GM12878 (cell line): ENCODE measurements at regions of chr7 and their contacts with region 1.

Region 1: GRCh38 chr7:5526100-5526905 is 102.7 kb upstream of the TNRC18 start:
- DNase-seq: no peak
- ATAC-seq: peak; percentile 4
- H3K4me3 ChIP-seq: peak overlapping the region; percentile 99; the same call in 1 of the 2 replicates
- H3K27ac ChIP-seq: peak overlapping the region; percentile 3
- H3K4me1 ChIP-seq: peaks cover 5% of the 10 kb centered on the region
- H3K27me3 ChIP-seq: no peaks in the 10 kb centered on the region
- CTCF ChIP-seq: peak in 1 of 3 experiments; percentile 31; a peak in 2 of 6 replicates
- EP300 ChIP-seq: no peak
- POLR2A ChIP-seq: no peak
- RAD21 ChIP-seq: 0 out of 2 replicates have a peak, but pooled peaks have one; percentile 1

Region 2: DNA sequence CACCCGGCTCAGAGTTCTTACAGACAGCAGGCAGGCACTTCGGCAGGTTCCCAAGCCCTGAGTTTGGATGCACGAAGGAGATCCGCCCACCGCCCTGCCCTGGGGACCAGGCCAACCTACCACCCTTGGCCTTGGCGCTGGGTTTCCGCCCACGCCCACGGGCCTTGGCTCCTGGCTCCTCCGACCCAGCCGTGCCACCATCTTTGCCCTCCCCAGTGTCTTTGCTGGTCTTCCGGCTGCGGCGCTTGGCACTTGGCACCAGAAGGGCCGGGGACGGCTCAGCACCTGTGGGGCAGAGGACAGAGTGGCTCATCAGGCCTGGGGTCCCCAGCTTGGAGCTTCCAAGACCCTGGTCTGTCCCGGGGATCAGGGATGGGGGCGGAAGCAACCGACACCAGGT is 211.4 kb before region 1 on chr7:
- CTCF ChIA-PET with region 1: no interaction called
- POLR2A ChIA-PET with region 1: no interaction called
- RAD21 ChIA-PET with region 1: no interaction called
- SMC1A ChIA-PET with region 1: no interaction called
- in situ Hi-C with region 1: no loop called
- intact Hi-C with region 1: no loop called
- DNase-seq: no peak
- ATAC-seq: no peak
- H3K4me3 ChIP-seq: no peak overlapping the region
- H3K27ac ChIP-seq: no peak overlapping the region
- H3K4me1 ChIP-seq: no peaks in the 10 kb centered on the region
- H3K27me3 ChIP-seq: no peaks in the 10 kb centered on the region
- CTCF ChIP-seq: no peak
- EP300 ChIP-seq: no peak
- POLR2A ChIP-seq: no peak
- RAD21 ChIP-seq: no peak

Region 3: GRCh38 chr7:5333121-5334045 is 192.9 kb before region 1 on chr7:
- CTCF ChIA-PET with region 1: no interaction called
- POLR2A ChIA-PET with region 1: interaction called, 11 read pairs
- RAD21 ChIA-PET with region 1: no interaction called
- SMC1A ChIA-PET with region 1: no interaction called
- in situ Hi-C with region 1: no loop called
- intact Hi-C with region 1: no loop called
- DNase-seq: no peak
- ATAC-seq: peak; percentile 57
- H3K4me3 ChIP-seq: no peak overlapping the region
- H3K27ac ChIP-seq: no peak overlapping the region
- H3K4me1 ChIP-seq: peaks cover 23% of the 10 kb centered on the region
- H3K27me3 ChIP-seq: no peaks in the 10 kb centered on the region
- CTCF ChIP-seq: no peak
- EP300 ChIP-seq: no peak
- POLR2A ChIP-seq: no peak
- RAD21 ChIP-seq: no peak

Region 4: DNA sequence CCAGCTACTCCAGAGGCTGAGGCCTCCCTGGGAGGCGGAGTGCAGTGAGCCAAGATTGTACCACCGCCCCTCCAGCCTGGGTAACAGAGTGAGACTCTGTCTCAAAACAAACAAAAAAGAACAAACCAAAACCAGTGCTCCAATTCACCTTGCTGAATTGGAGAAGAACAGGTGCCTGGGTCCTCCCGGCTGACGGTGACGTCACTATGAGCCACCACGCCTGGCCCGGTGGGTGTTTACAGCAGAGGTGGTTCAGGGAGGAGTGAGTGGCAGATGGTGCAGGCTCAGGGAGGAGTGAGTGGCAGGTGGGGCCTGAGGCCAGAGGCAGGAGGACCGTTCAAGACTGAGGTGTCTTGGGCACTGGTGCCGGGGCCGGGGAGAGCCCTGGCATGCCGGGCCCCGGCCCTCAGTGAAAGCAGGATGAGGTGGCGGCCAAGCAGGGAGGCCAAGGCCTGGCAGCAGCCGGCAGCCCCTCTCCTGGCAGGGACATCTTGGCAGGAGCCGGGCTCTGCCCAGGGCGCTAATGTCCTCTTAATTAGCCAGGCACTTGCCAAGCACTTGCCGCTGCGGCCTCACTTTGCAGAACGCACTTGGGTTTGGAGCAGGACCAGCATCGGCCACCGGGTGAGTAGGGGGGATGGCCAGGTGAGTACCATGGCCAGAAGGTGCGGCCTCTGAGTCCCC is 60.1 kb after region 1 on chr7:
- CTCF ChIA-PET with region 1: no interaction called
- POLR2A ChIA-PET with region 1: no interaction called
- RAD21 ChIA-PET with region 1: no interaction called
- SMC1A ChIA-PET with region 1: no interaction called
- in situ Hi-C with region 1: no loop called
- intact Hi-C with region 1: no loop called
- DNase-seq: no peak
- ATAC-seq: no peak
- H3K4me3 ChIP-seq: no peak overlapping the region
- H3K27ac ChIP-seq: no peak overlapping the region
- H3K4me1 ChIP-seq: peaks cover 27% of the 10 kb centered on the region
- H3K27me3 ChIP-seq: no peaks in the 10 kb centered on the region
- CTCF ChIP-seq: no peak
- EP300 ChIP-seq: no peak
- POLR2A ChIP-seq: no peak
- RAD21 ChIP-seq: no peak